SK-N-SH (cell line): ENCODE measurements at regions of chr2 and their contacts with region 1.

Region 1: GRCh38 chr2:17309741-17310339 is 208.4 kb downstream of the RAD51AP2 start:
- DNase-seq: peak; percentile 72
- H3K4me3 ChIP-seq: no peak overlapping the region; a peak in 1 of 4 replicates
- H3K27ac ChIP-seq: no peak overlapping the region
- H3K4me1 ChIP-seq: peaks cover 0 to 6% of the 10 kb centered on the region in 2 experiments; a peak in 2 of 4 replicates
- H3K27me3 ChIP-seq: no peaks in the 10 kb centered on the region
- CTCF ChIP-seq: peak; percentile 93
- EP300 ChIP-seq: no peak; a peak in 1 of 4 replicates
- RAD21 ChIP-seq: peak; percentile 96

Region 2: GRCh38 chr2:16763493-16763899 is 546.3 kb before region 1 on chr2:
- CTCF ChIA-PET with region 1: interaction called, 311 read pairs
- POLR2A ChIA-PET with region 1: no interaction called
- DNase-seq: no peak
- H3K4me3 ChIP-seq: no peak overlapping the region
- H3K27ac ChIP-seq: no peak overlapping the region
- H3K4me1 ChIP-seq: no peaks in the 10 kb centered on the region; a peak in 1 of 4 replicates
- H3K27me3 ChIP-seq: no peaks in the 10 kb centered on the region
- CTCF ChIP-seq: no peak
- EP300 ChIP-seq: no peak
- RAD21 ChIP-seq: no peak

Region 3: GRCh38 chr2:17083902-17084301 is 225.9 kb before region 1 on chr2:
- CTCF ChIA-PET with region 1: interaction called, 25 read pairs
- POLR2A ChIA-PET with region 1: no interaction called
- DNase-seq: peak; percentile 50
- H3K4me3 ChIP-seq: no peak overlapping the region
- H3K27ac ChIP-seq: peak overlapping the region in 1 of 2 experiments; percentile 98; a peak in 2 of 4 replicates
- H3K4me1 ChIP-seq: peaks cover 0 to 39% of the 10 kb centered on the region in 2 experiments; a peak in 2 of 4 replicates
- H3K27me3 ChIP-seq: no peaks in the 10 kb centered on the region
- CTCF ChIP-seq: no peak
- EP300 ChIP-seq: peak in 1 of 2 experiments; percentile 93; a peak in 2 of 4 replicates
- RAD21 ChIP-seq: peak; percentile 22; the same call in 1 of the 2 replicates

Region 4: DNA sequence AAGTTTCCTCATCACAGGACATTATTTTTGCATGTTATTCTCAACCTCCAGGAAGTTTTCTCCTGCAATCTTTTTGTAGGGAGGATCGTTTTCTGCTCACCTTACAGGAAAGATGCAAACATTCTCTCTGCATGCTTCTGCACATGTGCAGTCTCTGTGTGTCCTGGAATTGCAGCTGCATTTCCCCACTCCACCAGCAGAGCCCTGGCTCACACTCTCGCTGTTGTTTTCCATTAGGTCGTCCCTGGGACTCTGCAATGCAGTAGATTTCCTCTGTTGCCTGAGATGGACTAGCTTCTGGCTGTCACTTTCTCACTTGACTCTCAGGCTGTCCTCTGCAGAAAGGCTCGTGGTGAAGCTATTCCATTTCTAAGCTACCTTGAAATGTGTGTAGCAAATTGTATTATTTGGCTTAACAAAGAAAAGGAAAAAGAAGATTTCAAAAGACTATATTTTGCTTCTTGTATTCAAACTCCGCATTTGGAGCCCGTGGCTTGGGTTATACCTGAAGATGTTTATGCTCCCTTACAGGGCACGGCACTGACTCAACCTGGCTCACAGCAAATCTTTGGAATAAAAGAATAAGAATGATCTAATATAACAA is 138.3 kb before region 1 on chr2:
- CTCF ChIA-PET with region 1: interaction called, 27 read pairs
- POLR2A ChIA-PET with region 1: no interaction called
- DNase-seq: peak; percentile 66
- H3K4me3 ChIP-seq: no peak overlapping the region; a peak in 1 of 4 replicates
- H3K27ac ChIP-seq: no peak overlapping the region
- H3K4me1 ChIP-seq: peaks cover 0 to 3% of the 10 kb centered on the region in 2 experiments; a peak in 1 of 4 replicates
- H3K27me3 ChIP-seq: no peaks in the 10 kb centered on the region
- CTCF ChIP-seq: peak; percentile 65
- EP300 ChIP-seq: 0 out of 4 replicates have a peak, but pooled peaks of 1 of the 2 experiments have one; percentile 15
- RAD21 ChIP-seq: peak; percentile 70

Region 5: DNA sequence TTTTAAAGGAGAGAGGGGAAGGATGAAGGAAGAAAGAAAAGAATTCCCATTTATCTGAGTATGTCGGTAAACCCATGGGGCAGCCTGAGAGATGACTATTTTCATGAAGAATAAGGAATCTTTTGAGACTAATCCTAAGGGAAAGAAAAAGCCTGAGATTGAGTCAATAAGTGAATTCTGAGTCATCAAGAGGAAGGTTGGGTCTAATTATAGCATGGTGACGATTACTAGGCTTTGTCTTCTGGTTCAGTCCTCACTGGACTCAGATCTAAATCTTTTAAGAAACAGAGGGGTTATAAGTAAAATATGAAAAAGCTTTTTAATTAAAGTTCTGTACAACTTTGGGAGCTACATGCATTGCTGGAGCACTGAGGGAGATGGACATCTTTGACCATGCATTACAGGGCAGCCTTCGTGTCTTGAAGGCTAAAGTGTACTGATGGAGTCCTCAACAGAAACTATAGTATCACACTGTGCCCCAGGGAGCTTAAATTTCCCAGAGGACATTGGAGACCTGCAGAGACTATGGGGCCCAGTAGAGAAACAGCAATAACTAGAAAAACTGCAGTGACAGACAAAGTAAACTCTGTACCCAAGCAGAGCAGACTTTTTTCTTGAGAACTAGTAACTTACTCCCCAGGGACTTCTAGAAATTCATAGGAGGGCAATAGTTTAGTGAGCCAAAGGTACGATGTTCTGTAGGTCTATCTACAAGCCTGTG is 52.5 kb before region 1 on chr2:
- CTCF ChIA-PET with region 1: no interaction called
- POLR2A ChIA-PET with region 1: no interaction called
- DNase-seq: no peak
- H3K4me3 ChIP-seq: no peak overlapping the region
- H3K27ac ChIP-seq: no peak overlapping the region
- H3K4me1 ChIP-seq: no peaks in the 10 kb centered on the region
- H3K27me3 ChIP-seq: no peaks in the 10 kb centered on the region
- CTCF ChIP-seq: no peak
- EP300 ChIP-seq: no peak
- RAD21 ChIP-seq: no peak

Region 6: DNA sequence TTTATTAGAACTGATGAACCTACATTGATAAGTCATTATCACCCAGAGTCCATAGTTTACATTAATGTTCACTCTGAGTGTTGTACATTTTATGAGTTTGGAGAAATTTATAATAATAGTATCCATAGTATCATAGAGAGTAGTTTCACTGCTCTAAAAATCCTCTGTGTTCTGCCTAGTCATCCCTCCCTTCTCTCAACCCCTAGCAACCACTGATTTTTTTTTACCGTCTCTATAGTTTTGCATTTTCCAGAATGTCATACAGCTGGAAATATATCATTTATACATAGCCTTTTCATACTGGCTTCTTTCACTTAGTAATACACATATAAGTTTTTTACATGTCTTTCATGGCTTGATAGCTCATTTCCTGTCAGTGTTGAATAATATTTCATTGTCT is 22.7 kb before region 1 on chr2:
- CTCF ChIA-PET with region 1: interaction called, 15 read pairs
- POLR2A ChIA-PET with region 1: no interaction called
- DNase-seq: no peak
- H3K4me3 ChIP-seq: no peak overlapping the region
- H3K27ac ChIP-seq: no peak overlapping the region
- H3K4me1 ChIP-seq: no peaks in the 10 kb centered on the region
- H3K27me3 ChIP-seq: no peaks in the 10 kb centered on the region
- CTCF ChIP-seq: no peak
- EP300 ChIP-seq: no peak
- RAD21 ChIP-seq: no peak

Region 7: DNA sequence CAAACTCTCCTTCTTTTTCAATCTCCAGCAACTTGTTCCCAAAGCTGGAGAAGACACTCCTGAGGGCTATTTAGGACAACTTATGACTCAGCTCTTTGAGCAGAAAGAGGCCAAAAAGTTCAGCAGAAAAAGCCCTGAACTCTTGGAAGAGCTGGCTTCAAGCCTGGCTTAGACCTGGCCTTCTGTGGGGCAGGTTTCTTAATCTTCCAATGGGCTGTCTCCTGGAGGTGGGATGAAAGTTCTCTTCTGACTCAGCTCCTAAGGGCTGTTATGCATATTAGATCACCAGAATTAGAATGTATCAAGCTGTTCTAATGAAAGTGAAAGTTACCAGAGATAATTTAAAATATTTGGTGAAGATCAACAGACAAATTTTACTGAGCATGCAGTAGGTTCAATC is 79.0 kb after region 1 on chr2:
- CTCF ChIA-PET with region 1: no interaction called
- POLR2A ChIA-PET with region 1: no interaction called
- DNase-seq: no peak
- H3K4me3 ChIP-seq: no peak overlapping the region
- H3K27ac ChIP-seq: no peak overlapping the region
- H3K4me1 ChIP-seq: no peaks in the 10 kb centered on the region
- H3K27me3 ChIP-seq: no peaks in the 10 kb centered on the region
- CTCF ChIP-seq: no peak
- EP300 ChIP-seq: no peak
- RAD21 ChIP-seq: no peak

Region 8: DNA sequence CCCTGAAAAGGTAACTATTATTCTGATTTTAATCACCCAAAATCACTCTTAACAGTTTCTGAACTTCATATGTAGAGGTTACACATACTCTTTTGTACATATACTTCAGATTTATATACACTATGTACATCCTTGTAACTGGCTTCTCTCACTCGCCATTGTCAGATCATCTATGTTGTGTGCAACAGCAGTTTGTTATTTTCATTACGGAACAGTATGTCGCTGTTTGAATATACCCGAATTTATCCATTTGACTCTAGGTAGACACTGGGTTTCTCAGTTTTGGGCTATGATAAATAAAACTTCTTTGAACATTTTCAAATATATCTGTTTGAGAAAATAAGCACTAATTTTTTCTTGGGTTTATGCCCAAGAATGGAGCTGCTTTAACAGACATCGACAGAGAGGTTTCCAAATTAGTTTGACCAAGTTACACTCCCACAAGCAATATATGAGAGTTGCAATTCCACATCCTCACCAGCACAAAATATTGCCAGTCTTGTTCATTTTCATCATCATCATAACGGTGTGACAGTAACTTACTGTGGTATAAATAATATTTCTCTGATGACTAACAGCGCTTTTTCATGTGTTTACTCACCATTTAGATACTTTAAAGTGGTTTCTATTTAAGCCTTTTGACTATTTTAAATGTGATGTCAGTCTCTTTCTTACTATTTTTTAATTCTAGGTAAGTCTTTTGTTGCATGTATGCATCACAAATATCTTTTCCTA is 362.9 kb after region 1 on chr2:
- CTCF ChIA-PET with region 1: interaction called, 38 read pairs
- POLR2A ChIA-PET with region 1: no interaction called
- DNase-seq: no peak
- H3K4me3 ChIP-seq: no peak overlapping the region
- H3K27ac ChIP-seq: peak overlapping the region in 1 of 2 experiments; percentile 59; a peak in 3 of 4 replicates
- H3K4me1 ChIP-seq: peaks cover 5 to 10% of the 10 kb centered on the region in 2 experiments; a peak in 1 of 4 replicates
- H3K27me3 ChIP-seq: no peaks in the 10 kb centered on the region
- CTCF ChIP-seq: 0 out of 2 replicates have a peak, but pooled peaks have one; percentile 28
- EP300 ChIP-seq: no peak
- RAD21 ChIP-seq: no peak